ENCODE measurements at regions of chr12 and their contacts with region 1.

Region 1: DNA sequence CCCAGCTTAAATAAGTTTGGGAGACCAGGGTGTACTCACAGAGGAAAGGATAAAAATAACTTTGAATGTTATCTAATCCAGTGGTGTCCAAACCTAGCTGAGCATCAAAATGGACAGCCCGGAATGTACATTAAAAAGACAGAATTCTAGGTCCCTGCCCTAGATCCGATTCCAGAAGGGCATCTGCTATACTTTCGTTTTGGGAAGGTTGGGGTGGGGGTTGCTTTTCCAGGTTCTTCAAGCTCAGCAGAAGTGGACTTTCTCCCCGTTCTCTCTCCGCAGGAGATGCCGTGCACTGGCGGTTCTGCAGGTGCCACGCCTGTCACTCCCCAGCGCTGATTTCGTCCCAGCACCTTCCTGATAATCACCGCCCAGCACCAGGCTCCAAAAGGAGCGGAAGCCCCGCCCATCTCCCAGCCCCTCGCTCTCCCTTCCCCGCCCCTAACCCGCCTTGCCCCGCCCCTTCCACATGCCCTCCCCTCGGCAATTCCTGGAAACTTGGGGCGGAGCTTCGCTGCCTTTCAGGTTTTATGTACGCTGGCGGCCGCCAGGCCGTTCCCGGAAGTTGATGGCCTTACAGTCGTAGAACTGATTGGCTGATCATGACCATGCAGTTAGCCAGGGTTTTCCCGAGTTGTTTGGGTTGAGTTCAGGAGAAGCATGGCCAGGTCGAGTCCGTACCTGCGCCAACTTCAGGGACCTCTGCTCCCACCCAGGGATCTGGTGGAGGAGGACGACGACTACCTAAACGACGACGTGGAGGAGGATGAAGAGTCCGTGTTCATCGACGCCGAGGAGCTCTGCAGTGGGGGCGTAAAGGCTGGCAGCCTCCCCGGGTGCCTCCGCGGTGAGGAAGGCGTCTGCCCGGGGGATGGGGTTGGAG is at the start of gene HELB:
- DNase-seq: peak; percentile 99
- H3K4me3 Mint-ChIP-seq: peak within 1 kb of the TSS; percentile 99
- H3K27ac Mint-ChIP-seq: peak within 1 kb of the TSS; percentile 98
- H3K4me1 Mint-ChIP-seq: peaks cover 54% of the 10 kb centered on the region
- H3K27me3 Mint-ChIP-seq: peaks cover 2% of the 10 kb centered on the region
- total RNA-seq, gene HELB: 42.3 to 43.3 TPM

Region 2: DNA sequence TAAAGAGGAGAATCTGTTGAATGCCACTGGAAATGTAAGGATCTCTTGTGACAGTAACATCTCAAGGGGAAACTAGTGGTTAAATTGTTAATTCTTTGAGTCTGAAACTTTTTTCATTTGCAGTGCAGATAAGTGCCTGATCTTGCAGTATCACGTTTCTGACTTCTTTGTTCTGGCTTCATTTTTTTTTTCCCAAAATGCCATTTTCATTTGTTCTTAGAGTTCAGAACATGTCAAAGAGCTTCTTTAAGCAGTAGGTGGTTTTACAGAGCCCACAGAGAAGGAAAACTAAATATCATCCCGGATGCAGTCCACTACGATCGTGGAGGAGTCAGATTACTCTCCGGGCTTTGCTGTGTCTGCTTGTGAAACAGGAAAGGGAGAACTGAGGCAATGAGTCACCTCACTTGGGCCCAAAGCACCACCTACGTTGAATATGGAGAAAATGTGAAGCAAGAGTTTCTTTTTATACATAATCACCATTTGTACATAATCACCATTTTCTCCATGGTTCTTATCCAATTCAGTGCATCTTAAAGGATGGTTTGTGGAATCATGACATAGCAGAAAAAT is 434.0 kb before region 1 on chr12:
- CTCF ChIA-PET with region 1: no interaction called
- POLR2A ChIA-PET with region 1: no interaction called
- DNase-seq: no peak
- H3K4me3 Mint-ChIP-seq: no peak overlapping the region
- H3K27ac Mint-ChIP-seq: no peak overlapping the region
- H3K4me1 Mint-ChIP-seq: no peaks in the 10 kb centered on the region
- H3K27me3 Mint-ChIP-seq: peaks cover 11% of the 10 kb centered on the region

Region 3: DNA sequence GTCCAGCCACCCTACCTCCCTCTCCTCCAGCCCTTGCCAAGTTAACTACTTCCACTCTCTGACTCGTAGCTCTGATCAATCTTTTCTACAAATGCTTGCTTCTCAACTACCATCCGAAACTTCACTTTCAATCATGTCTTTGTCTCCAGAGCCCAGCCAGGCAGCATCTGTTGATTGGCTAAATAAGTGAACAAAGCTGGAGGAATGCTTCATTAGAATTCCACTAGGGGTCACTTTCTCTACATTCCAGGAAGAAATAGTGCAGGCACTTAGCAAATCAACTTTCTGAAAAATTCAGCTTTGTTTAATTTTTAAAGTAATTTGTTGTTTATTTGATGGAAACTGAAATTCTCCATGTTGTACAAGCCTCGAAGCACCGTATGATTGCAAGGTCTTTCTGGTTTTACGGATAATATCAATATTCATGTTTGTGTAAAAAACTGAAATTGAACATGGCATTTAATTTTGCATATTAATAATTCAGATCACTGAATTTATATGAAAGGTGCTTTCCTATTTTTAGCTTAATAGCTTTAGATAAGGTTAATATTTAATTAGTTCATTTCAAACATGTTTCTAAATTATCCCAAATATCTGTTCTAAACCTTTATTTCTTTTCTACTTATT is 32.3 kb before region 1 on chr12:
- CTCF ChIA-PET with region 1: interaction called, 14 read pairs
- POLR2A ChIA-PET with region 1: interaction called, 3 read pairs
- DNase-seq: peak; percentile 45
- H3K4me3 Mint-ChIP-seq: no peak overlapping the region
- H3K27ac Mint-ChIP-seq: no peak overlapping the region
- H3K4me1 Mint-ChIP-seq: peaks cover 13% of the 10 kb centered on the region
- H3K27me3 Mint-ChIP-seq: no peaks in the 10 kb centered on the region

Measured in activated CD4-positive, alpha-beta T cell treated with anti-CD3 and anti-CD28 coated beads, Interleukin-2, amount 10 ng/mL, durations not matched to agents 7 days and 5 days (primary cell).